Motor neuron (in vitro differentiated cells): ENCODE measurements at regions of chr16 and their contacts with region 1.

Region 1: GRCh38 chr16:88533932-88534732 is 36.1 kb upstream of the ZC3H18 start:
- ATAC-seq: peak; percentile 56 to 77 (median 73)
- H3K4me3 ChIP-seq: peak overlapping the region; percentile 76 to 95 (median 82)
- H3K27ac ChIP-seq: peak overlapping the region; percentile 93 to 95
- H3K4me1 ChIP-seq: peaks cover 23 to 31% of the 10 kb centered on the region in 2 donors

Region 2: DNA sequence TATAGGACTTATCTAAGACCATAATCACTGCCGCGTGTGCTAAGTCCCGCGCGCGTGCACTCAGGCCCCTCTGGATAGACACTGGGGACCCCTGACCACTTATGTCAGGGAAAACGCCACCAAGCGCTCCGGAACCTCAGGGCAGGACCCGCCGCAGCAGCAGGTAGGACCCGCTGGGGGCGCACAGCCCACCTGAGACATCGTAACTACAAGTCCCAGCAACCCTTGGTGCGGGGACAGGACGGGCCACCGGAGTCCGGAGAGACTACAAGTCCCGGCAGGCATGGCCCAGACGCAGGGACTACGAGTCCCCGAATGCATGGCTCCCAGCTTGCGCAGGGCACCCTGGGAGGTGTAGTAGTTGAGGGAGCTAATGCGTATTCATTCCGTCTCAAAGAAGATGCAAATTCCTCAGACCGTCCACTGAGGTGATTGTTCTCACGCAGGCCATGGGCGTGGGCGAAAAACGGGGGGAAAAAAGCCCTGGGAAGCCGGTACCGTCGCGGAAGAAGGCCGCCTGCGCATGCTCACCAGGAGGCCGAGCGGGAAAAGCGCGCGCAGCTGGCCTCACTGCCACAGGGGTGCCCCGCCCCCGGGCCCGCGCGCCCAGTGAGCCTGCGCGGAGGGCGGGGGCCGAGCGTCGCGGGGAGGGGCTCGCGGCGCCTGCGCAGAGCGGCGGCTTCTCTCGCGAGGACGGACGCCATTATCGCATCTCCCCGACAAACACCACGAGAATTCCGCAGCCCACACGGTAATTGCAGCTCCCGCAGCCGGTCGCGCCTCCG is 583.2 kb before region 1 on chr16 and contains the start of gene BANP:
- in situ Hi-C with region 1: loop called in 1 of 9 experiments (anchors 25 kb)
- ATAC-seq: peak; percentile 89 to 96 (median 95)
- H3K4me3 ChIP-seq: peak within 1 kb of the TSS; percentile 51 to 72 (median 56)
- H3K27ac ChIP-seq: peak within 1 kb of the TSS; percentile 96 to 98
- H3K4me1 ChIP-seq: peaks cover 6 to 17% of the 10 kb centered on the region in 2 donors
- total RNA-seq, gene BANP: 12.9 to 28.1 (median 18.5) TPM

Region 3: GRCh38 chr16:88347656-88348376 is 186.3 kb before region 1 on chr16:
- in situ Hi-C with region 1: no loop called
- ATAC-seq: no peak
- H3K4me3 ChIP-seq: no peak overlapping the region
- H3K27ac ChIP-seq: no peak overlapping the region
- H3K4me1 ChIP-seq: peaks cover 0 to 13% of the 10 kb centered on the region in 2 donors

Region 4: GRCh38 chr16:88442727-88443576 is 91.2 kb before region 1 on chr16:
- in situ Hi-C with region 1: loop called in 2 of 9 experiments (anchors 25 kb)
- ATAC-seq: peak; percentile 84 to 98 (median 92)
- H3K4me3 ChIP-seq: no peak overlapping the region
- H3K27ac ChIP-seq: no peak overlapping the region
- H3K4me1 ChIP-seq: peaks cover 2 to 3% of the 10 kb centered on the region in 2 donors